ENCODE measurements at regions of chr20 and their contacts with region 1.

Region 1: GRCh38 chr20:18632196-18633009 is 44.5 kb downstream of the DTD1 start:
- DNase-seq: peak; percentile 63
- H3K4me3 Mint-ChIP-seq: no peak overlapping the region
- H3K27ac Mint-ChIP-seq: no peak overlapping the region
- H3K4me1 Mint-ChIP-seq: no peaks in the 10 kb centered on the region
- H3K27me3 Mint-ChIP-seq: no peaks in the 10 kb centered on the region

Region 2: DNA sequence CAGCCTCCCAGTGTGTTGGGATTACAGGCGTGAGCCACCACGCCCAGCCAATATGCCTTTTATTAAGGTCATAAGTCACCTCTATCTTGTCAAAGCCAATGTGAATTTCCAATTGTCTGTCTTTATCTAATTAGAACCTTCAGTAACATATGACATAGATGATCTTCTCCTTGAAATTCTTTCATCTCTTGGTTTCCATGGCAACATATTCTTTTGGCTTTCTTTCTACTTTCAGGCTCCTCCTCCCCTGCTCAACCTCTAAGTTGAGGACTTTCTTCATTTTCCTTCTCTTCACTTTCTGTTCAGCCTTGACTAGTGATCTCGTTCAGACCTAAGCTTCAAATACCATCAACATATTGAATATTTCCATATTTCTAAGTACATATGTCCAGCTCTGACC is 181.2 kb before region 1 on chr20:
- CTCF ChIA-PET with region 1: no interaction called
- POLR2A ChIA-PET with region 1: no interaction called
- intact Hi-C with region 1: no loop called
- DNase-seq: no peak
- H3K4me3 Mint-ChIP-seq: no peak overlapping the region
- H3K27ac Mint-ChIP-seq: no peak overlapping the region
- H3K4me1 Mint-ChIP-seq: no peaks in the 10 kb centered on the region
- H3K27me3 Mint-ChIP-seq: no peaks in the 10 kb centered on the region

Region 3: GRCh38 chr20:18793625-18794427 is 161.4 kb after region 1 on chr20:
- CTCF ChIA-PET with region 1: interaction called, 4 read pairs
- POLR2A ChIA-PET with region 1: no interaction called
- intact Hi-C with region 1: loop called (anchors 1 kb)
- DNase-seq: peak; percentile 91
- H3K4me3 Mint-ChIP-seq: peak overlapping the region; percentile 90
- H3K27ac Mint-ChIP-seq: peak overlapping the region; percentile 86
- H3K4me1 Mint-ChIP-seq: peaks cover 12% of the 10 kb centered on the region
- H3K27me3 Mint-ChIP-seq: peaks cover 7% of the 10 kb centered on the region

Region 4: DNA sequence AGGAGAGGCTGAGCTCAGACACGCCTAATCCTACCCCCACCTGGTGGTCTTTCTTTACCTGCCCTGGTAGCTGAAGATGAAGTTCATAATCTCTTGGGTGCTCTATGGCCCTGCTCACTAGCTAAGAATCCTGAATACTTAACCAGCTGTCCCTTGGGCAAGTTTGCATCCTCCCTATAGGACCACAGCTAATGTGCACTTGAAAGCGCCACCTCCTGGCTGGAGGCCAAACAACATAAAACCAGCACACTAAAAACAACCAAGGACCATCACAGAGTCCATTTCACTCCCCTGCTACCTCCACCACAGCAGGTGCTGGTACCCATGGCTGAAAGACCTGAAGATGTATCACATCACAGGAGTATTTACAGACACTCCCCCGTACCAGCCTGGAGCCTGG is 424.5 kb after region 1 on chr20:
- CTCF ChIA-PET with region 1: interaction called, 6 read pairs
- POLR2A ChIA-PET with region 1: no interaction called
- intact Hi-C with region 1: loop called (anchors 1 kb)
- DNase-seq: peak; percentile 12
- H3K4me3 Mint-ChIP-seq: no peak overlapping the region
- H3K27ac Mint-ChIP-seq: no peak overlapping the region
- H3K4me1 Mint-ChIP-seq: no peaks in the 10 kb centered on the region
- H3K27me3 Mint-ChIP-seq: peaks cover 4% of the 10 kb centered on the region